ENCODE measurements at regions of chr5 and their contacts with region 1.

Region 1: GRCh38 chr5:102511666-102512065 is 12.9 kb upstream of the SLCO6A1 start:
- DNase-seq: no peak
- H3K27ac ChIP-seq: no peak overlapping the region
- CTCF ChIP-seq: no peak

Region 2: GRCh38 chr5:101904736-101905135 is 606.9 kb before region 1 on chr5:
- CTCF ChIA-PET with region 1: interaction called, 12 read pairs
- POLR2A ChIA-PET with region 1: no interaction called
- DNase-seq: no peak
- H3K27ac ChIP-seq: no peak overlapping the region
- CTCF ChIP-seq: no peak

Region 3: DNA sequence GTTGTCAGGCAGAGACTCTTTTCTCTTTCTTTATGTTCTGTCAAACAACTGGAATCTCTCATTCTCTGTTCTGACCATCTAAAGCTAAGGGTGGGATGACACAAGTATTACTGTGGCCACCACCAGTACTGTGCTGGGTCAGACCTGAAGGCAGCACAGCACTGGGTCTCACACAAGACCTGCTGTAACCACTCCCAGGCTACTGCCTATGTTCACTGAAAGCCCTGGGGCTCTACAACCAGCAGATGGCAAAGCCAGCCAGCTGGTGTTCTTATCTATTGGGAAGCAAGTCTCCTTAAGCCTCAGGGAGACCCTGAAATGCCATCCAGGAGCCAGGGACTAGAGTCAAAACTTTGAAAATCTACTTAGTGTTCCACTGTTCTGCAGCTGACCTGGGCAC is 405.1 kb before region 1 on chr5:
- CTCF ChIA-PET with region 1: no interaction called
- POLR2A ChIA-PET with region 1: no interaction called
- DNase-seq: no peak
- H3K27ac ChIP-seq: no peak overlapping the region
- CTCF ChIP-seq: no peak

Region 4: GRCh38 chr5:102971697-102972293 is 460.1 kb after region 1 on chr5:
- CTCF ChIA-PET with region 1: no interaction called
- POLR2A ChIA-PET with region 1: no interaction called
- DNase-seq: peak; percentile 42
- H3K27ac ChIP-seq: no peak overlapping the region
- CTCF ChIP-seq: peak; percentile 75

Measured in RWPE1 (cell line).